OCI-LY7 (cell line): ENCODE measurements at regions of chr10 and their contacts with region 1.

Region 1: DNA sequence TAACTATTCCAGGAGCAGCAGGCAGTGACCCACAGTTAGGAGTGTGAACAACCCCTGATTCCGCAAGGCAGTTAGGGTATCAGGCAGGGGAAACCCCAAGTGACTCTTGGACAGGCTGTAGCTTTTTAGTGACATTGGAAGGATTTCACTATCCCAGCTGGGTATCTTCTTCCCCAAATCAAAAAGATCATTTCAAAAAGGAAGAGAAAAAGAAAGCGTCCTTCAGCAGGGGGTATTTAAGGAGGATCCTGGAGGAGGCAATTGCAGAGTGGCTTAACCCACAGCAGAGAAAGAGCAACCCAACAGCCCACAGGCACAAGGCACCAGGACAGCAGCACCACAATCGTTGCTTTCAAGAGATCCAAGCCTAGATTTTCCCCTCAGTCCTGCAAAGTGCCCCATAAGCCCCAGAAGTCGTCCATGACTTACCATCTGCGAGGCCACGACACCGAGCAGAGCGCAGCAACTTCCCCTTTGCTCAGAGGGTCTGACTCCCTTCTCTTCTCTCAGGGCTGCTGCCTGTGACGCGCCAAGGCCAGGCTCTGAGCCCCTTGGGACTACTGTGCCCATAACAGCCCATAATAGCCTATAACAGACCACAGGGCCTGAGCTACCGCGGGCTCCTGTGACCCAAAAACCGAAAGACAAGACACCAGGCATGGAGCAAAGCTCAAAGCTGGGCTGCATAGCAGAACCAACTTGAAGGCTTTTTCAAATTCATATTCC is 19.8 kb downstream of the PIK3AP1 start:
- DNase-seq: peak; percentile 96
- H3K4me3 ChIP-seq: peak overlapping the region; percentile 75
- H3K27ac ChIP-seq: peak overlapping the region; percentile 96
- H3K4me1 ChIP-seq: peaks cover 81% of the 10 kb centered on the region
- CTCF ChIP-seq: no peak

Region 2: DNA sequence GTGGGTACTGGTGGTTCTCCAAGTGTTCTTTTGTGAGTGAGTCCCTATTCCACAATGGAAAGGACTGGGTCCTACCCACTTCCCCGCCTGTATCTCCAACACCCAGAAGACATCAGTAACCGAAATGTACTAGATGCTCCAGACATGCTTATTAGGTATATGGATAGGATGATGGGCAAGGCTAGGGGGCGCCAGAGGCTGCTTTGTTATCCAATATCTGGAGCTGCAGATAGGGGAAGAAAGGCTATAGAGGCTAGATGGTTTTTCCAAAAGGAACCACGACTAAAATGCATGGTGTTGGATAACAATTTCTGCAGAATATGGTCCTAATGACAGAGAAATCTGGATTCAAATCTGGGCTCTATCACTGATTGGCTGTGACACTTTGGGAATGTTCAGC is 57.6 kb before region 1 on chr10:
- CTCF ChIA-PET with region 1: no interaction called
- POLR2A ChIA-PET with region 1: interaction called, 4 read pairs
- intact Hi-C with region 1: loop called (anchors 2 kb)
- DNase-seq: peak; percentile 87
- H3K4me3 ChIP-seq: no peak overlapping the region
- H3K27ac ChIP-seq: peak overlapping the region; percentile 14
- H3K4me1 ChIP-seq: peaks cover 25% of the 10 kb centered on the region
- CTCF ChIP-seq: peak; percentile 98

Region 3: DNA sequence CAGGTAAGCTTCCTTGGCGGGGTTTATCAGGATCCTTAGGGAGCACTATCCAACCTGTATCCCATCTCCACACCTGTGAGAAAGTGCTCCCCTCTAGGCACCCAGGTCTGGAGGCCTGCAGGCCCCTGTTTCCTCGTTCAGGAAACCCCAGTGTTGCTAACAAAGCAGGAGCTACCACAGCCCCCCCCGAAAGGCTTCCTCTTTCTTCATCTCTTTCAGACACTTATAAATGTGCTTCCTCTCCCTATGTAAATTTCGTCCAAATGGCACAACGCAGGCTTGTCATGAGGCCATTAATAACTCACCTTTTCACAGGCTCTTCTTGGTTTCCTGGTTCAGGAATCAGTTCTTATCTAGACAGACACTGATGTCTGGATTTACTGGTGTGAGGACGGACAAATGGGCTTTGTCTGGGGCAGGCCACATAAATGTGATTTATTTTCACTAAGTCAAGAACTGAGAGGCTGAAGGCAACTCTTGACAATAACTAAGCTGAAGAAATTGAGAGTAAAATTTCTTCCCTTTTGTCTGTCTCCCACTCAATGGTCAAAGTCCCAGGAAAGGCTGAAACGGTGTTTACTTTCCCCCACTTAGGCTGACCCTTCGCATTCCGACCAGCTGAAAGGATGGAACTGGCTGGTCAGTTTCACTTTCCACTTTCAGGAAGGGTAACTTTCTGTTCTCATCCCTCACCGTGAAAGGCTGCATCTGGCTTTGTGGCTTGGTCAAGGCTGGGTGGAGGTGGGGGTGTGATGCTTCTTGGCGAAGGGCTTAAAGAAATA is 27.0 kb before region 1 on chr10:
- CTCF ChIA-PET with region 1: interaction called, 5 read pairs
- POLR2A ChIA-PET with region 1: interaction called, 28 read pairs
- intact Hi-C with region 1: loop called (anchors 1 kb)
- DNase-seq: peak; percentile 87
- H3K4me3 ChIP-seq: peak overlapping the region; percentile 62
- H3K27ac ChIP-seq: peak overlapping the region; percentile 96
- H3K4me1 ChIP-seq: peaks cover 88% of the 10 kb centered on the region
- CTCF ChIP-seq: no peak

Region 4: DNA sequence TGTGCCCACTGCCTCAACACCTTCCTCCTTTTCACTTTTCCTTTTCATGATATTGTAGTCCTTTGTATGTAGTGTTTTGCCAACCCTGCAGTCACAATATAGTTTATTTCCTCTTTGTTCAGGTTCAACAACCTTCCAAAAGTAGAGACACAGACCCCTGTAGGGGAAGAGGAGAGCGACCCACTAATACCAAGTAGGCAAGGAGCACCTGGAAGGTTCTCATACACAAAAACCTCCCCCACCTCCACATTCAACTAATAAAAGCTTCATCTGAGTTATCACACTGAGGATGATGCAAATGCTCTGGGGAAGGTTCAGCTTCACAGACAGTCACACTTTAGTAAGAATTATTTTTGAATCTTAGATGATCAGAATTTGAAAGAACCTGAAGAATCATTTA is 21.8 kb before region 1 on chr10:
- CTCF ChIA-PET with region 1: no interaction called
- POLR2A ChIA-PET with region 1: interaction called, 28 read pairs
- intact Hi-C with region 1: loop called (anchors 1 kb)
- DNase-seq: peak; percentile 63
- H3K4me3 ChIP-seq: peak overlapping the region; percentile 8
- H3K27ac ChIP-seq: peak overlapping the region; percentile 50
- H3K4me1 ChIP-seq: peaks cover 64% of the 10 kb centered on the region
- CTCF ChIP-seq: no peak